GM23248 (cell line): ENCODE measurements at regions of chr10 and their contacts with region 1.

Region 1: DNA sequence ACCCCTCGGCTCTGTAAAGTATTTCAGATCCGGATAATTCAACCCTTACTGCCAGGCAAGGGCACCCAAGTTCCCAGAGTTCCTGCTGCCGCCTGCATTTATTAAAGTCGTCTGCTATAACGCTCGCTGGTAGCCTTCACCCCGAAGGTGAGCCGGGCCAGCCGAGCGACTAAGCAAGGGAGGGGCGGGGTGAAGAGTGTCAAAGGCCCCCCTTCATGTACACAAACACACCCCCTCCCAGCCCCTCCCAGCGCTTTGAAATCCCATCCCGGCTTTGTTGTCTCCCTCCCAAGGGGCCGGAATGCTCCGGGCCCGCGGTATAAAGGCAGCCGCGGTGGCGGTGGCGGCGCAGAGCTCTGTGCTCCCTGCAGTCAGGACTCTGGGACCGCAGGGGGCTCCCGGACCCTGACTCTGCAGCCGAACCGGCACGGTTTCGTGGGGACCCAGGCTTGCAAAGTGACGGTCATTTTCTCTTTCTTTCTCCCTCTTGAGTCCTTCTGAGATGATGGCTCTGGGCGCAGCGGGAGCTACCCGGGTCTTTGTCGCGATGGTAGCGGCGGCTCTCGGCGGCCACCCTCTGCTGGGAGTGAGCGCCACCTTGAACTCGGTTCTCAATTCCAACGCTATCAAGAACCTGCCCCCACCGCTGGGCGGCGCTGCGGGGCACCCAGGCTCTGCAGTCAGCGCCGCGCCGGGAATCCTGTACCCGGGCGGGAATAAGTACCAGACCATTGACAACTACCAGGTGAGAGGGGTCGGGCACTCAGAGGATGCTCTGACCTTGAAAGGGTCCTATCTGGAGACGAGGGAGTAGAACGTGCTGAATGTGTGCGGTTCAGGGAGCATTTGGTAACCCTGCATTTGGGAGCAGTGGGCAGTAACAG is at the start of gene DKK1:
- DNase-seq: peak; percentile 92
- H3K4me3 ChIP-seq: peak within 1 kb of the TSS; percentile 92
- H3K27ac ChIP-seq: peak within 1 kb of the TSS; percentile 79
- H3K4me1 ChIP-seq: peaks cover 29% of the 10 kb centered on the region
- H3K27me3 ChIP-seq: no peaks in the 10 kb centered on the region
- total RNA-seq, gene DKK1: 505 and 558 TPM in 2 replicates

Region 2: DNA sequence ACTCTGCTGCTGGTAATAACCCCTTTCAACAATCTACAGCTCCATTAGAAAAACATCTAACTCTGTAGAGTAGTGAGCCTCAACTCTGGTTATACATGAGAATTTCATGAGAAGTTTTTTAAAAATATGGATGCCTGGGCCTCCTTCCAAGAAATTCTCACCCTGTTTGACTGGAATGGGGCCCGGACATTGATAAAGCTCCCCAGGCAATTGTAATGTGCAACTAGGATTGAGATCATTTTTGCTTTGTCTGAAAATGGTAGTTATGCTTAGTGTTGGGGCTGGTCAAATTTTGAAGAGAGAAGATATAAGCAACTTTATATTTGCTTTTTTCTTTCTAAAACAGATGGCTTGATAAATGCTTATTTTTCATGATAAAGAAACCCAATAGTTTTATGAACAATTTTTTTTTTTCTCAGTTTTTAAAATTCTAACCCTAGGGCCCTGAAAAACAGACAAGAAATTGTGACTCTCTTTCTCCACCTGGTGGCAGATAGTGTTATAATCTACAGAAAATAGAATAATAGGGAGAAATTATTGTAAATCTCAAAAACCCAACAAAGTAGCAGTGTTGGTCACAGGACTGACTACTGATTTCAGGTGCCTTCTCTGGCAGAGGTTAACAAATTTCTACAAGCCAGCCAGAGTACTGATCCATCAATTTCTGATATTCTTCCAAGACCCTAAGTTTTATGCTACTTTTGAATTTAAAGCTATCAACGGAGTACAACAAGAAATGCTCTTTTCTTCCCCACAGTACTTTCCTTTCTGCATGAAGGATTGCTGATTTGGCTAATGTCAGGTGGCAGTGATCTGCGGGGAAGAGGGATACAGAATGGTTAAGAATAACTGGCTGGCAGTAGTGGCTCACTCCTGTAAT is 174.7 kb after region 1 on chr10:
- in situ Hi-C with region 1: loop called (anchors 5 kb)
- DNase-seq: peak; percentile 67
- H3K4me3 ChIP-seq: 0 out of 2 replicates have a peak overlapping the region, but pooled peaks have one; percentile 1
- H3K27ac ChIP-seq: peak overlapping the region; percentile 36
- H3K4me1 ChIP-seq: peaks cover 77% of the 10 kb centered on the region
- H3K27me3 ChIP-seq: no peaks in the 10 kb centered on the region

Region 3: DNA sequence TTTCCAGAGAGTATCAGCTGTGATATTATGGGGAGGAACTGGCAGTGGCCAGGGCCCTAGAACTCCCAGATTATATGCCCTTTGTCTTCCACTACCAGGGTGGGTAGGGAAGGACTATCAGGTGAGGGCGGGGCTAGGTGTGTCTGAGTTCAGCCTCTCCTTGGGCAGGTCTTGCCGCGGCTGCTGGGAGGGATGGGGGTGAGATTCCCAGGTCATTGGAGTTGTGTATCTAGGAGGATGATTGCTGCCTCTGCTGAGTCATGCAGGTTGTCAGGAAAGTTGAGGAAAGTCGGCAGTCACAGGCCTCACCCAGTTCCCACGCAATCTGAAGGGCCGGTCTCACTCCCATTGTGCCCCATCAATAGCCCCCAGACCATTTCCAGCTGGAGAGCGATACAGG is 185.1 kb after region 1 on chr10:
- in situ Hi-C with region 1: no loop called
- DNase-seq: no peak
- H3K4me3 ChIP-seq: no peak overlapping the region
- H3K27ac ChIP-seq: no peak overlapping the region
- H3K4me1 ChIP-seq: no peaks in the 10 kb centered on the region
- H3K27me3 ChIP-seq: no peaks in the 10 kb centered on the region

Region 4: DNA sequence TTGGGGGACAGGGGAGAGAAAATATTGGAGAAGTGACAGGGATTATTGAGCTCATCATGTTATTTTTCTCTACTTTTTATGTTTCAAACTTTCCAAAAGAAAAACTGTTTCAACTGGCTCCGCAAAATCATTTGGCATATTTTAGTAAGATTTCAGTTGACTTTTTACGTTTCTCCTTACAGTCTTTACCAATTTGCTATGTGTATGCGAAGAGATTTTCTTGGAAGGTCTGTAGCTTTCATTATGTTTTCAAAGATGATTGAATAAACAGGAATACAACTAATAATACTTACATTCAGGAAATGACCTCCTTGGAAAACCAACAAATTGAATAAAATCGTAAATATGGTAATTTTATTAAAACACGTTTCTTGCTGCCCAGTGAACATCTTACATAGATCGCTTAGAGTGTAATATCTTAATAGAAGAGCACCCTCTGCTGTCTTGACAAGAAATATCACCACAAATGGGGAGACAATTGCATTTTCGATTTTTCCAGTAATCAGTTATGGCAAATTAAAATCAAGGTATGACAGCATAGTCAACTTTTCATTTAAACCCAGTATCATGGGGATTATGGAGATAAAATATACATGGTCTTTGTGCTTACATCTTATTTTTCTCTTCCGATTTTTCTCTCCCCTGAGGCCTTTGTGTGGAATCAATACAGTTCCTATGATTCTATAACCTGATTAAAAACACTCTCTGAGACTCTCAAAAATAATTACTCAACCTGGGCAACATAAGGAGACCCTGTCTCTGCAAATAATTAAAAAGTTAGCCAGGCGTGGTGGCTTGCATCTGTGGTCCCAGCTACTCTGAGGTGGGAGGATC is 415.3 kb after region 1 on chr10:
- in situ Hi-C with region 1: loop called (anchors 5 kb)
- DNase-seq: peak; percentile 74
- H3K4me3 ChIP-seq: peak overlapping the region; percentile 63
- H3K27ac ChIP-seq: no peak overlapping the region
- H3K4me1 ChIP-seq: no peaks in the 10 kb centered on the region
- H3K27me3 ChIP-seq: no peaks in the 10 kb centered on the region